ENCODE measurements at regions of chr2 and their contacts with region 1.

Region 1: GRCh38 chr2:7111626-7112025 is 194.4 kb downstream of the RNF144A start:
- DNase-seq: no peak
- H3K4me3 Mint-ChIP-seq: no peak overlapping the region
- H3K27ac Mint-ChIP-seq: no peak overlapping the region
- H3K4me1 Mint-ChIP-seq: no peaks in the 10 kb centered on the region
- H3K27me3 Mint-ChIP-seq: peaks cover 22% of the 10 kb centered on the region
- CTCF ChIP-seq: no peak

Region 2: DNA sequence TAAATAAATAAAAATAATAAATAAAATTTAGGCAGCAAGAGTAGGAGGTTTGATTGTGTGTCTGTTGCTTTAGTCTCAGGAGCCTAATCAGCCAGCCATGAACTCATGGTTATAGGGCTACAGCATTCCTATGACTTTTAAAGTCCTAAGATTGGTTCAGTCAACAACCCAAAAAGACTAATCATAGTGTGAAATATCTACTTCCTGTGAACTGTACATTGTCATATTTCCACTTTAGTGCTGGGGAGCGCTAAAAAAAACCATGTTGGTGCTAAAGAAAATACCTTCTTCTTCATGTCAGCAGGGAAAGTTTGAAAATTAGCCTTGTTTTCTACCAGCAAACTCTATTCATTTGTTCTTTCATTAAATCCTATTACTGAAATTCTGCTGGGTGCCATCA is 327.2 kb after region 1 on chr2:
- CTCF ChIA-PET with region 1: interaction called, 12 read pairs
- intact Hi-C with region 1: no loop called
- DNase-seq: no peak
- H3K4me3 Mint-ChIP-seq: no peak overlapping the region
- H3K27ac Mint-ChIP-seq: no peak overlapping the region
- H3K4me1 Mint-ChIP-seq: no peaks in the 10 kb centered on the region
- H3K27me3 Mint-ChIP-seq: no peaks in the 10 kb centered on the region
- CTCF ChIP-seq: no peak

Region 3: DNA sequence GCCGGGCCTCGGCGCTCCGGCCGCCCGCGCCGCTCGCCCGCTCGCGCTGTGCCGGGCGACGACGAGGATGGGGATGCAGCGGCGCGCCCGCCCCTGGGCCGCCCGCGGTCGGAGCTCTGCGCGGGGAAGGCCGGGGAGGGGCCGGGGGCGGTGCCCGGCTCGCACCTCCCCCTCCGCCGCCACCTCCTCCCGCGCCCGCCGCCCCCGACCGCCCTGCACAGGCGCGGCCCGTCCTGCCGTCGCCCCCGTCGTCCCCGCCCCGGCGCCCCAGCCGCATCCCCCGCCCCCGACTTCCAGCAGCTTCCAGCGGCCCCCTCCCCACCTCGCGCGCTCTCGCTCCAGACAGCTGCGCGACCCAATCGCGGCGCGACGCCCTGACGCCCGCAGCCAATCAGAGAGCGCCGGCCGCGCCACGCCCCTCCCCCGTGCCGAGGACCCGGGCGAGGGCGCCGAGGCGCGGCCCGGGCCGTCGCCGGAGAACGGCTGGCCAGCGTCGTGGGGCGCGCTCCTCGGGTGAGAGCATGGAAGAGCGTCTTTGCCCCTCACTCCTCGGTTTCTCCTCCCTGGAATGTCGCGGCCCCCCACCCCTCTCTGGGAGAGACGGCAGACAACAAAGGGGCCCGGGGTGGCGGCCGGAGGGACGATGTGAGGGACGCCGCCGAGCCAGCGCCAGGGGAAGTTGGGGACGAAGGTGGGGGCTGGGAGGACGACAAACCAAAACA is 1892.2 kb after region 1 on chr2 and contains the start of gene MBOAT2:
- CTCF ChIA-PET with region 1: interaction called, 10 read pairs
- intact Hi-C with region 1: no loop called
- DNase-seq: peak; percentile 92
- H3K4me3 Mint-ChIP-seq: peak within 1 kb of the TSS; percentile 92
- H3K27ac Mint-ChIP-seq: peak within 1 kb of the TSS; percentile 84
- H3K4me1 Mint-ChIP-seq: peaks cover 34% of the 10 kb centered on the region
- H3K27me3 Mint-ChIP-seq: no peaks in the 10 kb centered on the region
- CTCF ChIP-seq: no peak
- total RNA-seq, gene MBOAT2: 36.8 and 40.9 TPM in 2 replicates